ENCODE measurements at regions of chr7 and their contacts with region 1.

Region 1: GRCh38 chr7:68691261-68692216 is 906.7 kb upstream of the AUTS2 start:
- DNase-seq: no peak
- H3K4me3 ChIP-seq: no peak overlapping the region
- H3K27ac ChIP-seq: no peak overlapping the region
- H3K4me1 ChIP-seq: peaks cover 0 to 6% of the 10 kb centered on the region in 2 donors
- H3K27me3 ChIP-seq: no peaks in the 10 kb centered on the region
- CTCF ChIP-seq: no peak
- POLR2A ChIP-seq: no peak

Region 2: GRCh38 chr7:68955656-68956055 is 264.1 kb after region 1 on chr7:
- intact Hi-C with region 1: loop called (anchors 10 kb)
- DNase-seq: no peak
- H3K4me3 ChIP-seq: no peak overlapping the region
- H3K27ac ChIP-seq: no peak overlapping the region
- H3K4me1 ChIP-seq: no peaks in the 10 kb centered on the region
- H3K27me3 ChIP-seq: no peaks in the 10 kb centered on the region
- CTCF ChIP-seq: no peak
- POLR2A ChIP-seq: no peak